ENCODE measurements at regions of chr20 and their contacts with region 1.

Region 1: GRCh38 chr20:5844063-5844681 is 94.0 kb downstream of the SHLD1 start:
- DNase-seq: peak; percentile 84
- H3K4me3 Mint-ChIP-seq: peak overlapping the region; percentile 65
- H3K27ac Mint-ChIP-seq: peak overlapping the region; percentile 93
- H3K4me1 Mint-ChIP-seq: peaks cover 39% of the 10 kb centered on the region
- H3K27me3 Mint-ChIP-seq: peaks cover 2% of the 10 kb centered on the region

Region 2: DNA sequence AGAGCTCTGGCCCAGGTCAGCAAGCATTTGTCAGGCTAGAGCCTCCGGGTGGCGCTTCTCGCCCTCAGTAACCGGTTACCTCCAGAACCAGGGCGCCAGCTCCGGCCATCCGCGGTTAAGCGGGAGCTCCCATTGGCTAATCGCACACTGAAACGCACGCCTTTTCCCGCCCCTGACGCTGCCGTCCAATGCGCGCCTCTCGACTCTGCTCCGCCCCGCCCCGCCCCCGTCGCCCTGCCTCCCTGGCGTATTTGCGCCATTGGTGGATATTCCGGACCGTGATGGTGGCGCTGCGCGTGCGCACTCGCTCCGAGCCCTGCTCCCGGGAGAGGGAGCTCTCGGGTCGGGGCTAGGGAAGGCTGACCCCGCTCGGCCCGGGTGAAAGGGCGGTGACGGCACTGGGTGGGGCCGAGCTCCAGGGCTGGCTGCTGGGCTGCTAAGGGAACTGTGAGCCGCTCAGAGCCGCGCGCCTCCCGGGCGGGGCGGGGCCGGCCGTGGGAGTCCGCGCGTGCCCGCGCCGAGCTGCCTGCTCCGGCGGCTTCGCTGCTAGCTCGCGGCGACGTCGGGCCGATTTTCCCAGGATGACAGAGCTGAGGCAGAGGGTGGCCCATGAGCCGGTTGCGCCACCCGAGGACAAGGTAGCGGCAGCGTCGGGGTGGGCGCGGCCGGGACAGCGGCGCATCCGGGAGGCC is 717.5 kb before region 1 on chr20 and contains the start of gene CDS2:
- intact Hi-C with region 1: loop called (anchors 10 kb)
- DNase-seq: peak; percentile 100
- H3K4me3 Mint-ChIP-seq: peak within 1 kb of the TSS; percentile 95
- H3K27ac Mint-ChIP-seq: peak within 1 kb of the TSS; percentile 98
- H3K4me1 Mint-ChIP-seq: peaks cover 46% of the 10 kb centered on the region
- H3K27me3 Mint-ChIP-seq: no peaks in the 10 kb centered on the region
- total RNA-seq, gene CDS2: 34.7 and 39.2 TPM in 2 replicates

Region 3: GRCh38 chr20:5529331-5530148 is 314.6 kb before region 1 on chr20:
- intact Hi-C with region 1: loop called (anchors 5 kb)
- DNase-seq: peak; percentile 95
- H3K4me3 Mint-ChIP-seq: peak overlapping the region; percentile 60
- H3K27ac Mint-ChIP-seq: peak overlapping the region; percentile 80
- H3K4me1 Mint-ChIP-seq: peaks cover 21% of the 10 kb centered on the region
- H3K27me3 Mint-ChIP-seq: no peaks in the 10 kb centered on the region

Region 4: GRCh38 chr20:5806457-5807263 is 37.5 kb before region 1 on chr20:
- intact Hi-C with region 1: loop called (anchors 5 kb)
- DNase-seq: no peak
- H3K4me3 Mint-ChIP-seq: no peak overlapping the region
- H3K27ac Mint-ChIP-seq: no peak overlapping the region
- H3K4me1 Mint-ChIP-seq: peaks cover 10% of the 10 kb centered on the region
- H3K27me3 Mint-ChIP-seq: no peaks in the 10 kb centered on the region

Region 5: GRCh38 chr20:5825130-5825719 is 18.9 kb before region 1 on chr20:
- intact Hi-C with region 1: no loop called
- DNase-seq: no peak
- H3K4me3 Mint-ChIP-seq: no peak overlapping the region
- H3K27ac Mint-ChIP-seq: no peak overlapping the region
- H3K4me1 Mint-ChIP-seq: peaks cover 12% of the 10 kb centered on the region
- H3K27me3 Mint-ChIP-seq: no peaks in the 10 kb centered on the region

Region 6: DNA sequence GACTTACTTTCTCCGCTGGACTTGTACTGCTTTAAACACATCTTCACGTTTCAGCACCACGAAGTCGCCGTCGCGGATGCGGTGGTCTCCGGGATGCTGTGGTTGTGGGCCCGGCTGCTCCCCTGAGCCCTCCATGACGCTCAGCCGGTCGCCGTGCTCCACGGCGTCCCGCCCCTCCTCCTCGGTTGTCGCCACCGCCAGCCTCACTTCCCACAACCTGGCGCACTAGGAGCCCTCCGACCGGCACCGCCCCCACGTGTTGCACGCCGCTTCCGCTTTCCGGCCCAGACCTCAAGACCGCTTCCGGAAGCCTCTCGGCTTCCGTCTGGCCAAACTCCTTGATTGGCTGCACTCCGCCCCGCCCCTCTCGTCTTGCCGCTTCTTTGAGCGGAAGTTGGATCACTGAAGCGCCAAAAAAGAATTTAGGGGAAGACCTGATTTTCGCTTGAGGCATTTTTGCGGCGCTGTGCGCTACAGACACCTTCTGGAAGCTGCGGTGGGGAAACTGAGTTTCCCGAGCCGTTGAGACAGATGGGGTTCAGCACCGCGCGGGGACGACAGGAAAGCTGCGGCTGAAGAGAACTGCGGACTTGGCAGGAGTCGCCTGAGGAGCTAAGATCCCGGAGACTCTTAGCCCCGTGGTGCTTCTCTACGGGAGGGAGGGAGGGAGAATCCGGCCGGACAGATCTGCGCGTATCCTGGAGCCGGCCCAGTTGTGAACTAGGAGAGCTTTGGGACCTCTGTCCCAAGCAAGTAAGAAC is 106.3 kb after region 1 on chr20 and contains the starts of genes MCM8 and TRMT6:
- intact Hi-C with region 1: loop called (anchors 1 kb)
- DNase-seq: peak; percentile 99
- H3K4me3 Mint-ChIP-seq: peak within 1 kb of the TSS; percentile 99
- H3K27ac Mint-ChIP-seq: peak within 1 kb of the TSS; percentile 98
- H3K4me1 Mint-ChIP-seq: peaks cover 46% of the 10 kb centered on the region
- H3K27me3 Mint-ChIP-seq: peaks cover 2% of the 10 kb centered on the region
- total RNA-seq, gene MCM8: 41.0 and 42.2 TPM in 2 replicates
- total RNA-seq, gene TRMT6: 33.6 and 35.5 TPM in 2 replicates

Region 7: DNA sequence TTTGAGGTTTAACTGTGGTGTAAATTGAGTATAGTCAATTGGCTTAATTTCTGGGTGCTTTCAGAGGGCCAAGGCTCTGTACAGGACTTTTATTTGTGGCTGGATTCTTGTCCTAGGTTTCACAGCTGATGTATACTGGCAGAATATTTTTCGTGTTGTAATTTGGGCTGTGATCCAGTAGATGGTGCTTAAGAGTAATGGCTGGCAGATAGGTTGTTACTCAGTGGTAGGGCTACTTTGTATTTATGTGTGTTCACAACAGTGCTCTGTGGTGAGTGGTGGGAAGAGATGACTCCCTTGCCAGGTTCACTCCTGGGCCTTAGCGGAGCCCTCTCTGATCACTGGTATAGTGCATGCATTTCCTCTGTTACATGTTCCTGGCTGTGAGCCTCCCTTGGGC is 313.2 kb after region 1 on chr20:
- intact Hi-C with region 1: no loop called
- DNase-seq: no peak
- H3K4me3 Mint-ChIP-seq: no peak overlapping the region
- H3K27ac Mint-ChIP-seq: no peak overlapping the region
- H3K4me1 Mint-ChIP-seq: no peaks in the 10 kb centered on the region
- H3K27me3 Mint-ChIP-seq: peaks cover 13% of the 10 kb centered on the region

Measured in activated CD4-positive, alpha-beta T cell treated with anti-CD3 and anti-CD28 coated beads, Interleukin-2, amount 10 ng/mL, durations not matched to agents 24 days and 14 days (primary cell).